Activated CD4-positive, alpha-beta T cell treated with anti-CD3 and anti-CD28 coated beads, Interleukin-2, amount 10 ng/mL, durations not matched to agents 24 days and 14 days (primary cell): ENCODE measurements at regions of chr2 and their contacts with region 1.

Region 1: GRCh38 chr2:61538200-61538919 is at the start of gene XPO1:
- DNase-seq: peak; percentile 99
- H3K4me3 Mint-ChIP-seq: peak within 1 kb of the TSS; percentile 95
- H3K27ac Mint-ChIP-seq: peak within 1 kb of the TSS; percentile 100
- H3K4me1 Mint-ChIP-seq: peaks cover 35% of the 10 kb centered on the region
- H3K27me3 Mint-ChIP-seq: peaks cover 6% of the 10 kb centered on the region
- total RNA-seq, gene XPO1: 230 TPM in 2 replicates

Region 2: GRCh38 chr2:60756191-60757041 is 781.9 kb before region 1 on chr2 and contains the start of gene PAPOLG:
- intact Hi-C with region 1: loop called (anchors 2 kb)
- DNase-seq: peak; percentile 99
- H3K4me3 Mint-ChIP-seq: peak within 1 kb of the TSS; percentile 97
- H3K27ac Mint-ChIP-seq: peak within 1 kb of the TSS; percentile 99
- H3K4me1 Mint-ChIP-seq: peaks cover 29% of the 10 kb centered on the region
- H3K27me3 Mint-ChIP-seq: no peaks in the 10 kb centered on the region
- total RNA-seq, gene PAPOLG: 18.1 and 21.6 TPM in 2 replicates

Region 3: GRCh38 chr2:61065715-61066709 is 472.3 kb before region 1 on chr2 and contains the start of gene SANBR:
- intact Hi-C with region 1: loop called (anchors 5 kb)
- DNase-seq: peak; percentile 97
- H3K4me3 Mint-ChIP-seq: peak within 1 kb of the TSS; percentile 84
- H3K27ac Mint-ChIP-seq: peak within 1 kb of the TSS; percentile 80
- H3K4me1 Mint-ChIP-seq: peaks cover 8% of the 10 kb centered on the region
- H3K27me3 Mint-ChIP-seq: peaks cover 1% of the 10 kb centered on the region
- total RNA-seq, gene SANBR: 3.1 and 3.4 TPM in 2 replicates

Region 4: GRCh38 chr2:61470965-61471904 is 67.1 kb before region 1 on chr2 and contains the start of gene USP34:
- intact Hi-C with region 1: loop called (anchors 1 kb)
- DNase-seq: peak; percentile 96
- H3K4me3 Mint-ChIP-seq: peak within 1 kb of the TSS; percentile 98
- H3K27ac Mint-ChIP-seq: peak within 1 kb of the TSS; percentile 98
- H3K4me1 Mint-ChIP-seq: peaks cover 19% of the 10 kb centered on the region
- H3K27me3 Mint-ChIP-seq: no peaks in the 10 kb centered on the region
- total RNA-seq, gene USP34: 84.3 and 93.8 TPM in 2 replicates

Region 5: GRCh38 chr2:61512768-61513398 is 25.5 kb before region 1 on chr2:
- intact Hi-C with region 1: no loop called
- DNase-seq: no peak
- H3K4me3 Mint-ChIP-seq: no peak overlapping the region
- H3K27ac Mint-ChIP-seq: no peak overlapping the region
- H3K4me1 Mint-ChIP-seq: peaks cover 6% of the 10 kb centered on the region
- H3K27me3 Mint-ChIP-seq: no peaks in the 10 kb centered on the region

Region 6: DNA sequence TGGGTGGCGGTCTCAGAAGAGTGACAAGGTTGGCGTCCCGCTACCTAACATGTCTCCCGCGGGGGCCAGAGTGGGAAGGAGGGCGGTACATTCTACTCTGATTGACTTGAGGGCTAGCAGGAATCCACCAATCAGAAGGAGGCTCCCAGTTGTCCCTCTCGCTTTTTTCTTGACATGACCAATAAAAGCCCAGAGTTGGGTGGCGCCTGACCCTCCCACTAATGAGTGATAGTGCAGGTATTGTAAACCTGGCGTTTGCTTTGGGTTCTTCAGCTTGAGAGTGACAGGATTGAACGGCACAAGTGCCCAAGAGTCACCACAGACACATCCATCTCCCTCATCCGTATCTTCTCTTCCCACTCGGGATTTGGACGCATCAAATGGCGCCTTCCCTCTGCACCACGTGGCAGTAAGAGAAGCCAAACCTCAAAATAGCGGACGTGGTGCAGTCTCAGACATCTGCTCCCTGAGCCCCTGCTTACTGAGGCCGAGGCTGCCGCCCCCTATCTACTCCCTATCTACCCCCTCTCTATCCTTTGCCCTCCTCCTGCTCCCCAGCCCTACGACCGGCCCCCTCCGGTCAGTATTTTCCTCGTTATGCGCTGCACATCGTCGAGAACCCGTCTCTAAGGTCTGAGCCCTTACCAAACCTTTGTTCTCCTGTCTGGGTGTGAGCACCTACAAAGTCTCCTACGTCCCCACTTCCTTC is 316.3 kb after region 1 on chr2:
- intact Hi-C with region 1: loop called (anchors 1 kb)
- DNase-seq: peak; percentile 96
- H3K4me3 Mint-ChIP-seq: peak overlapping the region; percentile 96
- H3K27ac Mint-ChIP-seq: peak overlapping the region; percentile 88
- H3K4me1 Mint-ChIP-seq: peaks cover 16% of the 10 kb centered on the region
- H3K27me3 Mint-ChIP-seq: no peaks in the 10 kb centered on the region

Region 7: GRCh38 chr2:62705007-62705829 is 1166.9 kb after region 1 on chr2 and contains the start of gene EHBP1:
- intact Hi-C with region 1: loop called (anchors 5 kb)
- DNase-seq: peak; percentile 100
- H3K4me3 Mint-ChIP-seq: peak within 1 kb of the TSS; percentile 84
- H3K27ac Mint-ChIP-seq: peak within 1 kb of the TSS; percentile 46
- H3K4me1 Mint-ChIP-seq: peaks cover 27% of the 10 kb centered on the region
- H3K27me3 Mint-ChIP-seq: peaks cover 12% of the 10 kb centered on the region
- total RNA-seq, gene EHBP1: 23.9 and 27.4 TPM in 2 replicates